Right ventricle myocardium inferior (tissue), 1 donor: ENCODE measurements at regions of chr11 and their contacts with region 1.

Region 1: DNA sequence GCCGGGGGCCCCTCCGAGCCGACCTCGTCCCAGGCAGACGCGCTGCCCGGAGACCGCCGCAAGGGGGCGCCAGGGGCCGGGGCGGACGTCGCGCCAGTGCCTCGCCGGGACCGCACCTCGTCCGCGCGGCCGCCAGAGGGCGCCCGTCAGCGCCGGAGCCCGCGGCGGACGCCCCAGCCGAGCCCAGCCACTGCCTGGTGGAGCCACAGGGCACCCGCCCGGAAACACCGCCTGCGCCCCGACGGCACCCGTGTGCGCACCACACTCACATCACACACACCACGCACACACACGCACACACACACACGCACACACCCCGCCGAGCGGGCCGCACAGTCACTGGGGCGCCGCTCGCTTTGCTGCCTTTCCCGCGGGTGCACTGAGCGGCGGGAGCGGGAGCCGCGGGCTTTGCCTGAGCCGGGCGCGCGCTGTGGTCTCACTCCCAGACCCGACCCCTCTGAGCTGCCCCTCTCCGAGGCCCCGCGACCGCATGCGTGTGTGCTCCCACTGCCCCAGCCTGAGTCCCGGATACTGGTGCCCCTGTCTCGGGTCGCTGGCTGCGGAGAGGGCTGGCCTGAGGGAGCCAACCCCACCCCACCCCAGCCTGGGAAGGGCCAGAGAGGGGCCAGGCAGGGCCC is 449.3 kb downstream of the OPCML start:
- DNase-seq: peak; percentile 74
- ATAC-seq: peak; percentile 93

Region 2: GRCh38 chr11:132962041-132962440 is 120.9 kb before region 1 on chr11:
- intact Hi-C with region 1: no loop called
- DNase-seq: no peak
- ATAC-seq: no peak

Region 3: GRCh38 chr11:133123366-133123765 is 40.4 kb after region 1 on chr11:
- intact Hi-C with region 1: no loop called
- DNase-seq: no peak
- ATAC-seq: no peak

Region 4: GRCh38 chr11:133156986-133157745 is 74.2 kb after region 1 on chr11:
- intact Hi-C with region 1: loop called (anchors 1 kb)
- DNase-seq: no peak
- ATAC-seq: peak; percentile 60

Region 5: DNA sequence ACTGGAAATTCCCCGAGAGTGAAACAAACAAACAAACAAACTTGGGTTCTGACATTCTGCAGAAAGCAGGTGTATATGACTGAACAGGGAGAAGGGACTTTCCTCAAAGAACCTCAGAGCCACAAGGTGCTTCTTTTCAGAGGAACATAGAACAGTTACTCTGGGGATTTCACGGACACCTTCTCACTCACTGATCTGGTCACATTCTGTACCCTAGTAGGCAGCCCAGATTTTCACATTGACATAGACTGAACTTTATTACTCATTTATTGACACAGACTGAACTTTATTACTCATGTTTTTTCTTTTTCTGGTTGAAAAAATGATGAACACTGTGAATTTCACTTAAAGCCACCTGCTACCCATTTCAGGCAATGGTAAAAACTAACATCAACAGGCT is 186.3 kb after region 1 on chr11:
- intact Hi-C with region 1: no loop called
- DNase-seq: no peak
- ATAC-seq: no peak

Region 6: GRCh38 chr11:133619973-133620372 is 537.0 kb after region 1 on chr11:
- intact Hi-C with region 1: loop called (anchors 10 kb)
- DNase-seq: no peak
- ATAC-seq: peak; percentile 57

Region 7: DNA sequence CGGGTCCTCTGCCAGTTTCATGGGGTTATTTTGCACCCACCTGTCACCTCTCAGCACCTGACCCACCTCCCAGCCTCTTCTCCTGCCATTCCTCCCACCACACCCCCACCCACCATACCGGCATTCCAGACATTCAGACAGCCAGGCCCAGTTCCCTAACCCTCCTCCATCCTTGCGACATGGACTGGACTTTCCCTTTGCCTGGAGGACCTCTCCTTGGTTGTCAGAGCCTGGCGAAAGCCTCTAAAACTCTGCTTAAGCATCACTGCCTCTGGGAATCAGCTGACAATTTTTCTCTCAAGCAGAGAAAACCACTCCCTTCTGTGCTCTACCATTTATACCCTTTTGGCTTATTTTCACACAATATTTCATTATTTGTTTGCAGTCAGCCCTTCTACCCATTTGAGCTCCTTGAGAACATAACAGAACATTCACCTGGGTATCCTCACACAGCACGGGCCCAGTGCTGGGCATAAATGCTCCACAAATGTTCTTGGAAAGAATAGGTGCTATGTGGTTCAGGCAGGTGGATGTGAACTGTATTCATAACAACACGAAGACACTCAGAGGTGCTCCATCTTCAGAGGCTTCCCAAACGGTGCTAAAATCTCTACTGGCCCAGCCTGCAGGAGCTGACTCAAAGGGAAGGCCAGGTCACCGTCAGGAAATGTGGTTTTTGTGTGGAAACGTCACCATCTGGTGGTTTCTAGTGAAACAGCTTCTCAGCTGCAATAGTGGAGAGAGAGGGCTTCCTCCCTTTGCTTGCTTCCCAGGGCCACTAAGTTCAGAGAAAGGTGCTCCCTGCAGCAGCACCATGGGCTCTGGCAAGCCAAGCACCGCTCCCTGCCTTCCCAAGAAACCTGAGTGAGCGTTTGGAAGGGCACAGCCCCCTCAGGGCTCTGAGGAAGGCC is 752.0 kb after region 1 on chr11:
- intact Hi-C with region 1: loop called (anchors 2 kb)
- DNase-seq: no peak
- ATAC-seq: peak; percentile 72